Pancreas (tissue), 10 donors: ENCODE measurements at regions of chr2 and their contacts with region 1.

Region 1: DNA sequence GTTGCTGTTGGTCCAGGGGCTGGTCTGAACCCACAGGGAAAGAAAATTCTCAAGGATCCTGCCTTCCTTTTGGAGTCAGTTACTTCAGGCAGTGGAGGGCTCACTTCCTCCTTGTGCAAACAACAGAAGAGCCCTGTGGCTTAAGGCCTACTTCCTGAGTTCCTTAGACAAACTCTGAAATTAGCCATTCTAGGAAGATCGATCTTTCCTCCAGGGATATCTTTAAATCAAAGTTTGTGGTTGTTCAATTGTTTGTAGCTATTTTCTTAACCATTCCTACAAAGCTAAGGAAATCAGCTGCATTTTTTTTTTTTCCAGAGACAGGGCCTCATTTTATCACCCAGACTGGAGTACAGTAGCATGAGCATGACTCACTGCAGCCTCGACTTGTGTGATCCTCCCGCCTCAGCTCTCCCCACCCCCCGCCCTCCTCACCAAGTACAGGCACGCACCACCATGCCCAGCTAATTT is 156.0 kb downstream of the TANC1 start:
- DNase-seq: no peak
- ATAC-seq: peak; percentile 62 to 77 (median 70)
- H3K4me3 ChIP-seq: no peak overlapping the region
- H3K27ac ChIP-seq: peak overlapping the region in 3 of 4 donors; percentile 8 to 56 (median 15)
- H3K4me1 ChIP-seq: peaks cover 5 to 21% (median 11%) of the 10 kb centered on the region in 3 donors
- H3K27me3 ChIP-seq: no peaks in the 10 kb centered on the region
- CTCF ChIP-seq: no peak

Region 2: DNA sequence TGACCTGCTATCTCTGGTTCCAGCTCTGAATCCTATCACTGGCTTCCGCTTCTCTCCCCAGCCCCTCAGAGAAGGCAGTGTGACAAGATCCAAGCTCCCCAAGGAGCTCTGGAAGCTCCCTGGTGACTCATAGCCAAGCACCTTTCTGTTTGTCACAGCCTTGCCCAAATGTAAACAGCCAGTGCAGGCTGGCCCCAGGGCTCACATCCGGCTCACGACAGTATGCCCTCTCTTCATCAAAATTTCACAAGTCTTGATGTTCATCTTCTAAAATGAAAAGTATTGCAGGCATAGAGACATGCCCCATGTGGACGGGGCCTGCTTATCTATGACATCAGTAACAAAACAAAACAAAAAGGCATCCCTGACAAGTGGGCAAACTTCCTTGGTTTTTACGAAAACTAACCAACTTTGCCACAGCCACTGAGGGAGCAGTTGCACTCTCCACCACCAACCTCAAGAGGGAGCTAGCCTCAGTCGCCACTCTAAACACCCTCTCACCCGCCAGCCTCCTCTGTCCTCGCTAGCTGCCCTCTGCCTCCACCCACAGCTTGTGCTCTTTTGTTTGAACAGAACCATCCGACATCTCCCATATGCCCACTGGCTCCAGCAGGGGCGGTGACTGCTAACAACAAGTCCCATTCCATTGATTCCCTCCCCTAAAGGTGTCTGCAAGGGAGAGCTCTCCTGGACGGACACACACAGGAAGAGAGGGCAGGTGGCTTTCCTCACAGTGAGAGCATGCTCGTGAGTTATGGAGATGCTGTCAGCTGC is 400.4 kb before region 1 on chr2:
- intact Hi-C with region 1: no loop called
- DNase-seq: no peak
- ATAC-seq: peak in 3 of 4 donors; percentile 16 to 69 (median 59)
- H3K4me3 ChIP-seq: no peak overlapping the region
- H3K27ac ChIP-seq: peak overlapping the region in 2 of 4 donors; percentile 5 to 17
- H3K4me1 ChIP-seq: peaks cover 0 to 6% (median 5%) of the 10 kb centered on the region in 3 donors
- H3K27me3 ChIP-seq: no peaks in the 10 kb centered on the region
- CTCF ChIP-seq: no peak

Region 3: DNA sequence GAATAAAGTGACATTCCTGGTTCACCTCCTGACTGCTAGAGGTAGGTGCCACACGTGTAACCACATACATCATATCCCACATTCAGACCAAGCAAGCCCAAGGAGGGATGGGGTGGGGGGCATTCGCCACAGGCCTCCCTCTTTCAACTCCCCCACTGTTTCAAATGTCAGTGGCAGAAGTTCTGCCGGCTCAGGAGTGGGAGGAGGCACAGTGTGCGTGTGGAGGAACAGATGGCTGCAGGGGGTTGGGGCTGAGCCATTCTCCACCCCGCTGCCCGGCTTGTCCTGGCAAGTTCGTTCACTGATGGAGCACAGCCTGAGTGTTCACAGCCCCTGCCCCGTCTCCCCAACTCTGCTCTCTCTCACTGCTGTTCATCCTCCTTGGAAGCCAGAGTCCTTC is 231.4 kb before region 1 on chr2:
- intact Hi-C with region 1: loop called in 1 of 3 experiments (anchors 10 kb)
- DNase-seq: no peak
- ATAC-seq: no peak
- H3K4me3 ChIP-seq: no peak overlapping the region
- H3K27ac ChIP-seq: no peak overlapping the region
- H3K4me1 ChIP-seq: no peaks in the 10 kb centered on the region
- H3K27me3 ChIP-seq: no peaks in the 10 kb centered on the region
- CTCF ChIP-seq: no peak

Region 4: GRCh38 chr2:158903711-158904443 is 220.6 kb before region 1 on chr2:
- intact Hi-C with region 1: loop called (anchors 5 to 10 kb)
- DNase-seq: no peak
- ATAC-seq: no peak
- H3K4me3 ChIP-seq: no peak overlapping the region
- H3K27ac ChIP-seq: no peak overlapping the region
- H3K4me1 ChIP-seq: no peaks in the 10 kb centered on the region
- H3K27me3 ChIP-seq: no peaks in the 10 kb centered on the region
- CTCF ChIP-seq: no peak

Region 5: GRCh38 chr2:159366538-159366937 is 242.1 kb after region 1 on chr2:
- intact Hi-C with region 1: no loop called
- DNase-seq: no peak
- ATAC-seq: no peak
- H3K4me3 ChIP-seq: no peak overlapping the region
- H3K27ac ChIP-seq: no peak overlapping the region
- H3K4me1 ChIP-seq: no peaks in the 10 kb centered on the region
- H3K27me3 ChIP-seq: no peaks in the 10 kb centered on the region
- CTCF ChIP-seq: no peak